ENCODE measurements at regions of chrX and their contacts with region 1.

Region 1: GRCh38 chrX:4830568-4831557 is 1117.4 kb upstream of the PRKX start:
- DNase-seq: peak; percentile 43 to 82
- H3K4me3 ChIP-seq: no peak overlapping the region
- H3K27ac ChIP-seq: peak overlapping the region; percentile 39
- H3K4me1 ChIP-seq: peaks cover 12% of the 10 kb centered on the region
- H3K27me3 ChIP-seq: no peaks in the 10 kb centered on the region
- CTCF ChIP-seq: no peak

Region 2: GRCh38 chrX:4844387-4844786 is 13.5 kb after region 1 on chrX:
- CTCF ChIA-PET with region 1: no interaction called
- POLR2A ChIA-PET with region 1: no interaction called
- intact Hi-C with region 1: loop called (anchors 1 kb)
- DNase-seq: peak; percentile 45 to 88
- H3K4me3 ChIP-seq: no peak overlapping the region
- H3K27ac ChIP-seq: peak overlapping the region; percentile 28
- H3K4me1 ChIP-seq: peaks cover 18% of the 10 kb centered on the region
- H3K27me3 ChIP-seq: no peaks in the 10 kb centered on the region
- CTCF ChIP-seq: no peak